Activated naive CD4-positive, alpha-beta T cell treated with anti-CD3 and anti-CD28 coated beads, Interleukin-2, amount 10 ng/mL, durations not matched to agents 7 days and 5 days (primary cell): ENCODE measurements at regions of chr15 and their contacts with region 1.

Region 1: DNA sequence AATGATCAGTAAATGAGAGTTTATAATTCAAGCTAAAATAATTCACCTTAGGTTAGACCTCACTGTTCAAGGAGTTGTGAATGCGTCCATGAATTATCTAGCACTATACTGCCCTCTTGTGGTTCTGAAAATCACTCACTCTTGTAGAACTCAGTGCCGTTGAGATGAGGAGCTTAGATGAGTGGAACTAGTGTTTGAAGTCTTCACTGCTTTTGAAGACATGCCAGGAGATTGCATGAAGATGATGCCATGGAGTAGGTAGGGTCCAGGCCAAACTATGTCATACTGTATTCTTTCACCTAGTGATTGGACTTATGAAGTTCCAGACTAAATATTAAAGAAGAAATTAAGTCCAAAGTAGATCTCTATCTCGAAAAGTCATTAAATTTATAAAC is 28.8 kb downstream of the LYSMD4 start:
- DNase-seq: no peak
- H3K4me3 Mint-ChIP-seq: no peak overlapping the region
- H3K27ac Mint-ChIP-seq: no peak overlapping the region
- H3K4me1 Mint-ChIP-seq: peaks cover 51% of the 10 kb centered on the region
- H3K27me3 Mint-ChIP-seq: no peaks in the 10 kb centered on the region

Region 2: GRCh38 chr15:99282121-99282520 is 422.3 kb before region 1 on chr15:
- CTCF ChIA-PET with region 1: interaction called, 99 read pairs
- DNase-seq: no peak
- H3K4me3 Mint-ChIP-seq: no peak overlapping the region
- H3K27ac Mint-ChIP-seq: no peak overlapping the region
- H3K4me1 Mint-ChIP-seq: peaks cover 31% of the 10 kb centered on the region
- H3K27me3 Mint-ChIP-seq: no peaks in the 10 kb centered on the region

Region 3: GRCh38 chr15:99371180-99372103 is 333.0 kb before region 1 on chr15:
- CTCF ChIA-PET with region 1: interaction called, 11 read pairs
- DNase-seq: no peak
- H3K4me3 Mint-ChIP-seq: no peak overlapping the region
- H3K27ac Mint-ChIP-seq: peak overlapping the region; percentile 34
- H3K4me1 Mint-ChIP-seq: peaks cover 14% of the 10 kb centered on the region
- H3K27me3 Mint-ChIP-seq: no peaks in the 10 kb centered on the region

Region 4: DNA sequence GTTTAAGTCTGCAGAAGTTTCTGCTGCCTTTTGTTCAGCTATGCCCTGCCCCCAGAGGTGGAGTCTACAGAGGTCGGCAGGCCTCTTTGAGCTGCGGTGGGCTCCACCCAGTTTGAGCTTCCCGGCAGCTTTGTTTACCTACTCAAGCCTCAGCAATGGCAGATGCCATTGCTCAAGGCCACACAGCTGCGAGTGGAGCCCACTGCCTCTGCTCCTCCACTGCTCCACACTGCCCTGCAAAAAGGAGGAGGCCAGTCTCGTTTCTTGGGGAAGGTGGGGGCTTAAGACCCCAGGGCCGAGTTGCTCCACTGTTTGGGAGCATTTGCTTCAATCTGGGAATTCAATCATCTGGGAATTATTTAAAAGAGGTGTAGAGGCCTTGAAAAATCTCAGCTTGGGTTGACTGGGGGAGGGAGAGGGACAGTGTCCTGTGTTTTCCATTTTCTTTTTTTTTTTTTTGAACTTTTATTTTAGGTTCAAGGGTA is 283.2 kb before region 1 on chr15:
- CTCF ChIA-PET with region 1: interaction called, 12 read pairs
- DNase-seq: peak; percentile 85
- H3K4me3 Mint-ChIP-seq: peak overlapping the region; percentile 47
- H3K27ac Mint-ChIP-seq: peak overlapping the region; percentile 91
- H3K4me1 Mint-ChIP-seq: peaks cover 57% of the 10 kb centered on the region
- H3K27me3 Mint-ChIP-seq: no peaks in the 10 kb centered on the region

Region 5: GRCh38 chr15:99522288-99522687 is 182.2 kb before region 1 on chr15:
- CTCF ChIA-PET with region 1: no interaction called
- DNase-seq: no peak
- H3K4me3 Mint-ChIP-seq: no peak overlapping the region
- H3K27ac Mint-ChIP-seq: no peak overlapping the region
- H3K4me1 Mint-ChIP-seq: peaks cover 6% of the 10 kb centered on the region
- H3K27me3 Mint-ChIP-seq: peaks cover 4% of the 10 kb centered on the region

Region 6: DNA sequence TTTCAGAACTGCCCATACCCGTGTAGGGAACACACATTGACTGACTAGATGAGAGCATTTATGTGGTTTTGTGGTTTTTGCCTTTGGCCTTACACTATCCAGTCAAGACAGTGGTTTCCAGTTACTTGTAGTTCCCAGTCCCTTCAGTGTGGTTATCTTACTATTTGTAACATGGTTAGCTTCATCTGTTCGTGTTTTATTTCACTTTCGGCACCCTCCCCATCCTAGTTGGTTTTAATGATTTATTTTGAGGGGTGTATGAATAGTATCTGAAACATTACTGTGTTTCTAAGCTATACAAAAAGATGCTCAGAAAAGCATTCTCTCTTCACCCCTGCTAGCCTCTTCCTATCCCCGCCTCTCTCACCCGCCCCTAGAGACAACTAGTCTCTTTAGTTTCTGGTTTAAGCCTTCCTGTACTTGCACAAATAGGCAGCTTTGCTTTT is 14.7 kb after region 1 on chr15:
- CTCF ChIA-PET with region 1: interaction called, 18 read pairs
- DNase-seq: no peak
- H3K4me3 Mint-ChIP-seq: no peak overlapping the region
- H3K27ac Mint-ChIP-seq: no peak overlapping the region
- H3K4me1 Mint-ChIP-seq: peaks cover 37% of the 10 kb centered on the region
- H3K27me3 Mint-ChIP-seq: no peaks in the 10 kb centered on the region

Region 7: DNA sequence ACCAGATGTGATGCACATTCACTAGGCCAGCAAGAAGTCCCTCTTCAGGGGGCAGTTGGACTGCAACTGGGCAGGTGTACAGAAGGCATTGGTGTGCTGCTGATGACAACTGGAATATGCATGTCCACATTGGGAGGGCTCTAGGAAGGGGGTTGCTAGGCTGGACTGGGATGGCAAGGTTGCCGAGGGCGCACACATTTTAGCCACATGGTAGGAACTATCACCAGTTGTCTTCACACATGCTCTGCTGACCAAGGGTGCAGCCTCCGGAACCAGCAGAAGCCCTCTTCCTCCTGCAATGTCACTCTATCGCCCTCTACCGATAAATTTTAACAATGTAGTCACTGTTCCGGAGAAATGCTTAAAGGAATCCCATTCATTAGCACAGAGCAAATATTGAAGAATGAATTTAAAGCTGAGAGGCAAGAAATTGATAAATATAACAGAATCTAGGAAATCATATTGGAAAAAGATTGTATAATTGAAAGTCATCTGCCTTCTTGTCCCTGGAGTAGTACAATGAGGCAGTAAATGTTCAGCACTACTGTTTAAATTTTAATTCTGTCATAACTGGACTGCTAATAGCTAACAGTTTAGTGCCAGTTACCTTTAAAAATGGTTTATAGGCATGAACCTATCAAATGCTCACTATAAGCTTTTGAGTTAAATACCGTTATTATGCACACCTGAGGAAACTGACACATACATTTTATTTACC is 51.4 kb after region 1 on chr15:
- CTCF ChIA-PET with region 1: interaction called, 28 read pairs
- DNase-seq: peak; percentile 46
- H3K4me3 Mint-ChIP-seq: no peak overlapping the region
- H3K27ac Mint-ChIP-seq: no peak overlapping the region
- H3K4me1 Mint-ChIP-seq: peaks cover 5% of the 10 kb centered on the region
- H3K27me3 Mint-ChIP-seq: peaks cover 18% of the 10 kb centered on the region

Region 8: DNA sequence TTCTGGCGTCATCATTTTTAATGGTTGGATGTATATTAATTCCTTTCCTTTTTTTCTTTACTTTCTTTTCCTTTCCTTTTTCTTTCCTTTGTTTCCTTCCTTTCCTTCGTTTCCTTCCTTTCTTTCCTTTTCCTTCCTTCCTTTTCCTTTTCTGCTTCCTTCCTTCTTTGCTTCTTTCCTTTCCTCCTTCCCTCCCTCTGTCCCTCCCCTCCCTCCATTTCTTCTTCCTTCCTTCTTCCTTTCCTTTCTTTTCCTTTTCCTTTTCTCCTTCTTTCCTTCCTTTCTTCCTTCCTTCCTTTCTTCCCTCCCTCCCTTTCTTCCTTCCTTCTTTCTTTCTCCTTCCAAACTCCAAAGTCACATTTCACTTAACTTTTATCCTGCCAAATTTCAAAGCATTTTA is 83.7 kb after region 1 on chr15:
- CTCF ChIA-PET with region 1: no interaction called
- DNase-seq: no peak
- H3K4me3 Mint-ChIP-seq: no peak overlapping the region
- H3K27ac Mint-ChIP-seq: no peak overlapping the region
- H3K4me1 Mint-ChIP-seq: no peaks in the 10 kb centered on the region
- H3K27me3 Mint-ChIP-seq: peaks cover 7% of the 10 kb centered on the region